HCT116 (cell line): ENCODE measurements at regions of chr9 and their contacts with region 1.

Region 1: DNA sequence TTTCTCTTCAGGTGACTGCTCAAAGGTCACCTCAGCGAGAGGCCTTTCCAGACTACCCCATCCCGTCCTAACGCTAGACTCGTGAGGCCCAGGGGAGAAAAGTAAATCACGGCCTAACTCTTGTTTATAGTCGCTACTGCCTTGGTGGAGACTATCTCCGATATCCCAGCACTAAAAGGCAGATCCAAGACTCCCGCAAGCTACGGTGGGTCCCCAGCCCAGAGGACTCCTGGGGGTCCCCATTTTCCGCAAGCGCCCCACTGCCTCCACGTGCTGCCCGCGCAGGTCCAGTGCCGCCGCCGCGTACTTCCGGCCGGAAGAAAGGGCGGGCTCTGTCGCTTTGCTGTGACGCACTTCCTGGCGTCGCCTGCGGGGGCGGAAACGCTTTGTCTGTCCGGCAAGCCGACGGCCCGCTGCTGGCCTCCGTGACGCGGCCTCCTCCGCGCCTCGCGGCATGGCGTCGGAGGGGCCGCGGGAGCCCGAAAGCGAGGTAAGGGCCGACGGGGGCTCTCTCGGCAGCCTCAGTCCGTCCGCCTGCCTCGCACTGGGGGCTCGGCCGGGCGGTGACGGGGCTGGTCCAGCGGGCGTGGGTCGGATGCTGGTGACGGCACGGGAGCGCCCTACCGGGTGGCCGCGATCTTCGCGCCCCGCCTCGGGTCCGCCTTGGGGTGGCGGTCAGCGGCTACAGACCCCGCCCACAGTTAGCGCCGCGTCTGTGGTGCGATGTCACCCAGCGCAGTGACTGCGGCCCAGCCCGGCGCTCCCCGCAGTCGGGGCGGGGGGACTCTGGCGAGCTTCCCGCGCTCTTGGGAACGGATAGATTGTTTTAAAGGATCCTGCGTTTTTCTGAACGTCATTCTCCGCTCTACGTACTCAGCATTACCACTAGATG is at the start of gene SECISBP2:
- DNase-seq: peak; percentile 87
- ATAC-seq: peak; percentile 95
- H3K4me3 ChIP-seq: peak within 1 kb of the TSS; percentile 63 to 69
- H3K27ac ChIP-seq: peak within 1 kb of the TSS; percentile 95
- H3K4me1 ChIP-seq: peaks cover 18 to 44% of the 10 kb centered on the region in 2 experiments
- H3K27me3 ChIP-seq: no peaks in the 10 kb centered on the region
- CTCF ChIP-seq: peak in 2 of 3 experiments; percentile 63 to 67; a peak in 4 of 6 replicates
- POLR2A ChIP-seq: no peak
- RAD21 ChIP-seq: no peak
- total RNA-seq, gene SECISBP2: 41.6 TPM

Region 2: DNA sequence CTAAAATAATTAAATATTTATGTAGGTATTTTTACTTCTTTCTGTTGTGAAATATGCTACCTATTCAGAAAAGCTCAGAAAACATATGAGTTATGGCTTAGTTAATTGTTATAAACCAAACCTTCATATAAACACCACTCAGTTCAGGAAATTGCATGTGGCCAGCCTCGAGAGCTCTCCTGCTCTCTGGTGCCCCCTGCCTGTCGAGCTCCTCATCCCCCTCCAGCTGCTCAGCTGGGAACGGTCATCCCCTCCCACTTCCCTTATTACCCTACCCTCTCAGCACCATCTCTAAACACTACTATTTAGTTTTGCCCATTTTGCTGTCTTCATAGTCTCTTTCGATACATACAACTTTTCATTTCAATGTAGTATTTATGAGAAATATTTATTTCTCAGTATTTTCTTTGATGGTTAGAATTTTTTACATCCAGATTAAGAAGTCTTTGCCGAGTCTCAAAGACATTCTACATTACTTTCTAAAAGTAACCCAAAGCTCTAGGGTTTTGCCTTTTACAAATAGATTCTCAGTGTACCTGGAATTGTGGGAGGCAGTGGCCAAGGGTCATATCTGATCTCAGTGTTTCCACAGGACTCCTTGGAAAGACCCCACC is 230.8 kb after region 1 on chr9:
- CTCF ChIA-PET with region 1: interaction called, 7 read pairs
- POLR2A ChIA-PET with region 1: no interaction called
- RAD21 ChIA-PET with region 1: no interaction called
- intact Hi-C with region 1: loop called (anchors 1 kb)
- DNase-seq: peak; percentile 52
- ATAC-seq: peak; percentile 99
- H3K4me3 ChIP-seq: no peak overlapping the region
- H3K27ac ChIP-seq: no peak overlapping the region
- H3K4me1 ChIP-seq: no peaks in the 10 kb centered on the region
- H3K27me3 ChIP-seq: no peaks in the 10 kb centered on the region
- CTCF ChIP-seq: peak; percentile 77 to 96 (median 93)
- POLR2A ChIP-seq: no peak
- RAD21 ChIP-seq: peak; percentile 87

Region 3: DNA sequence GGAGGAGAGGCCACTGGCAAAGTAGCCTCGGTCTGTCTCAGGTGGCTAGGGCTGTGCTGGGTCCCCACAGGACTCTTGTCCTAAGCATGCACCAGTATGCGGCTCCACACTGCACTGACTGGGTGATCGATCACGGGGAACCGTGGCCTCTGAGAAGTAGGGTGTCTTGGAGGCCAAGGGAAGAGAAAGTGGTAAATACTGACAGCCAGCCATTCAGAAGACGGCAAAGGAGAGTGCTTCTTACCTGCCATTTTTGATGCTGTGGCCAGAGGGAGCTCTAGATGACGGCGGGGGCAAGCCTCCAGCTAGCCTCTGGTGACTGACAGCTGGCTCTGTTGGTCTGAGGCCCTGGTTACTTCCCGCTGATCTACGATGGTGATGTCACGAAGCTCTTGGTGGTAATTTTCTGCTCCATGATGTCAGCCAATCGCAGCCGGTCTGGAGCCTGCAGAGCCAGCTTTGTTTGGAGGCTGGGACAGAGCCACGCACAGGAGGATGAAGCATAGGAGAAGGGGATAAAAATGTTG is 246.0 kb after region 1 on chr9:
- CTCF ChIA-PET with region 1: interaction called, 3 read pairs
- POLR2A ChIA-PET with region 1: no interaction called
- RAD21 ChIA-PET with region 1: no interaction called
- intact Hi-C with region 1: loop called (anchors 5 kb)
- DNase-seq: peak; percentile 82
- ATAC-seq: peak; percentile 100
- H3K4me3 ChIP-seq: no peak overlapping the region
- H3K27ac ChIP-seq: no peak overlapping the region
- H3K4me1 ChIP-seq: peaks cover 4 to 10% of the 10 kb centered on the region in 2 experiments; a peak in 3 of 4 replicates
- H3K27me3 ChIP-seq: no peaks in the 10 kb centered on the region
- CTCF ChIP-seq: peak; percentile 18 to 35 (median 34); a peak in 4 of 6 replicates
- POLR2A ChIP-seq: no peak
- RAD21 ChIP-seq: no peak

Region 4: GRCh38 chr9:90102292-90102901 is 784.0 kb after region 1 on chr9:
- CTCF ChIA-PET with region 1: no interaction called
- POLR2A ChIA-PET with region 1: no interaction called
- RAD21 ChIA-PET with region 1: no interaction called
- intact Hi-C with region 1: loop called (anchors 10 kb)
- DNase-seq: peak; percentile 90
- ATAC-seq: peak; percentile 99
- H3K4me3 ChIP-seq: no peak overlapping the region
- H3K27ac ChIP-seq: no peak overlapping the region
- H3K4me1 ChIP-seq: peaks cover 6 to 9% of the 10 kb centered on the region in 2 experiments; a peak in 2 of 4 replicates
- H3K27me3 ChIP-seq: 0 out of 2 replicates have a peak, but pooled peaks cover 10% of the 10 kb centered on the region
- CTCF ChIP-seq: peak; percentile 78 to 85 (median 80)
- POLR2A ChIP-seq: no peak
- RAD21 ChIP-seq: peak; percentile 92